GM12878 (cell line): ENCODE measurements at regions of chr19 and their contacts with region 1.

Region 1: GRCh38 chr19:3665681-3666544 is 34.4 kb downstream of the PIP5K1C start:
- DNase-seq: no peak
- ATAC-seq: peak; percentile 96
- H3K4me3 ChIP-seq: no peak overlapping the region
- H3K27ac ChIP-seq: no peak overlapping the region; the same call in 1 of the 2 replicates
- H3K4me1 ChIP-seq: peaks cover 11% of the 10 kb centered on the region
- H3K27me3 ChIP-seq: no peaks in the 10 kb centered on the region
- CTCF ChIP-seq: peak; percentile 82 to 97 (median 94)
- EP300 ChIP-seq: no peak
- POLR2A ChIP-seq: no peak
- RAD21 ChIP-seq: peak; percentile 84

Region 2: DNA sequence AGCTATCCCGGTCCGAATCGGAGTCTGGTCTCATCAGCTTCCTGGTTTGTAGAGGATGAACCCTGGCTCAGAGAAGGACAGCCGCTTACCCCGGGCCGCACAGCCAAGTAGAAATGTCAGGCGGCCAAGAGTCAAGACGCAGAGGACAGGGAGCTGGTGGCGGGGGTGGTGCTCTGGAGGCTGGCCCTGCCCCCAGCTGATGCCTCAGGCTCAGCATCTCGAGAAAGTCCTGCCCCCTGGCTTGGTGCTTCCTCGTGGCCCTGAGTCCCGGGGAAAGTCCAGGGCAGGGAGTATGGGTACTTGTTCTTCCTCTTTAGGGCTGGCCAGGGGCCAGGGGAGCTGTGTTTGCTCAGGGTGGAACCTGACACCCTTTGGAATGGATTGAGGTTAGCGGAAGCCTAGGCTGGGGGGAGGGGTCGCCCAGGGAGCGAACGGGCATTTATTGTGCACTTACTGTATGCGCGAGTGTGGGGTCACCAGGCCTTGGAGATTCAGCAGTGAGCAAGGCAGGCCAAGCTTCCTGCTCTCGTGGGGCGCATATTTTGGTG is 44.4 kb after region 1 on chr19:
- CTCF ChIA-PET with region 1: interaction called, 4 read pairs
- POLR2A ChIA-PET with region 1: no interaction called
- RAD21 ChIA-PET with region 1: interaction called, 4 read pairs
- SMC1A ChIA-PET with region 1: no interaction called
- in situ Hi-C with region 1: no loop called
- intact Hi-C with region 1: loop called (anchors 1 kb)
- DNase-seq: no peak
- ATAC-seq: peak; percentile 52
- H3K4me3 ChIP-seq: no peak overlapping the region
- H3K27ac ChIP-seq: no peak overlapping the region
- H3K4me1 ChIP-seq: no peaks in the 10 kb centered on the region
- H3K27me3 ChIP-seq: no peaks in the 10 kb centered on the region
- CTCF ChIP-seq: no peak
- EP300 ChIP-seq: no peak
- POLR2A ChIP-seq: no peak
- RAD21 ChIP-seq: no peak